Activated naive CD4-positive, alpha-beta T cell treated with anti-CD3 and anti-CD28 coated beads for 36 hours (primary cell): ENCODE measurements at regions of chr6 and their contacts with region 1.

Region 1: DNA sequence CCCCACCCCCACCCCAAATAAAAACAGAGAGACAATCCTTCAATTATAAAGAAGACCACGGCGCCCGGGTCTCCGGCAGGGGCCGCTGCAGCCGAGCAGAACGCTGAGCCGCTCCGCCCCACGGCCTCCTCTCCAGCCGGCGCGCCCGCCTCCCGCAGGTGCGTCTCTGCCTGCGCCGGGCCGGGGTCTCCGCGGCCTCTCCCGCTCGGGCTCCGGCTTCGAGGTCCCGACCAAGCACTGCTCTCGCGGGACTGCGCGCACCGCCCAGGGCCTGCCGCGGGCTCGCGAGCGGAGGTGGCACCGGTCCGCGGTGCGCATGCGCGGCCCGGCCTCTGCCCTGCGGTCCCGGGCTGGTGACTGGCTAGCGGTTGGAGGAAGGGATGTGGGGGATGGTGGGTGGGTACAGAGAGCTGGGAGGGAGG is 241 bp upstream of the SIRT5 start:
- DNase-seq: peak; percentile 91
- H3K4me3 Mint-ChIP-seq: peak overlapping the region; percentile 92
- H3K27ac Mint-ChIP-seq: peak overlapping the region; percentile 97
- H3K4me1 Mint-ChIP-seq: peaks cover 19% of the 10 kb centered on the region
- H3K27me3 Mint-ChIP-seq: no peaks in the 10 kb centered on the region

Region 2: DNA sequence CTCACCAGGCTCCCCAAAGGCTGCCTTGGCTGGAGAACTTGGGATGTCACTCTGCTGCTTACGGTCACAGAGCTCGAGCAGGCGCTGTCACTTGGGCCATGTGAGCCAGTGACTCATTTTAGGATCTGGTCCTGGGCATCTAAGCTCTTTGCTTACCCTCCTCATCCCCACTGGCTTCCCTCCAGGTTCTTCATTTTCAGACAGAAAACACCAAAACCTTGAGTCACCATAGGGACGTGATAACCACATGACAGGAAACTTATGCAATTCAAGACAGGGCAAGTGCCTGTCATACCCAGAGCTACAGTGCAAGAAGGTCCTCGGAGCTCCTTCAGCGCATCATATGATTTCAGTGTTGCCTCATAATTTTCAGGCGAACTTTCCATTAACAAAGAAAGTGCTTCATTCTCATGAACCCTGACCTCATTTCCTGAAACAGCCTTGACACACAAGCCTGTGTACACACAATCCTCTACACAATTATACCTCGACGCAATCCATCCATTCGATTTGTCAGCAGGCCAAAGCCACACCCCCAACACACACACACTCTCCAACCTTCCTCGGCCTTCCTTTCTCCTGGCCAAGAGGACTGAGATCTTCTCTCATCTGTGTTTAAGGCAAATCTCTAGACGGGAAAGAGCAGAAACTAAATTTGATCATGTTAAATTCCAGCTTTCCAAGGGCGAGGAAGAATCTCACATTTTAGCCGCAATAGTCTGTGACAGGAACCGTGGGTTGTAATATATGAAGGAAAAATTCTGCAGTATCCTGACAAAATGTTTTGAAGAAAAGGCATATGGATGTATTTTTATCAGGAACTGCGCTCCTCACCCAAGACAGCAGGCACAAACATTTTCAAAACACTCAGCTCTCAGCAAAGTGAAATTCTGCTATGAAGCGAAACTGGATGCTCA is 271.2 kb before region 1 on chr6:
- CTCF ChIA-PET with region 1: interaction called, 4 read pairs
- intact Hi-C with region 1: loop called (anchors 1 kb)
- DNase-seq: peak; percentile 79
- H3K4me3 Mint-ChIP-seq: peak overlapping the region; percentile 10
- H3K27ac Mint-ChIP-seq: peak overlapping the region; percentile 86
- H3K4me1 Mint-ChIP-seq: peaks cover 38% of the 10 kb centered on the region
- H3K27me3 Mint-ChIP-seq: no peaks in the 10 kb centered on the region

Region 3: DNA sequence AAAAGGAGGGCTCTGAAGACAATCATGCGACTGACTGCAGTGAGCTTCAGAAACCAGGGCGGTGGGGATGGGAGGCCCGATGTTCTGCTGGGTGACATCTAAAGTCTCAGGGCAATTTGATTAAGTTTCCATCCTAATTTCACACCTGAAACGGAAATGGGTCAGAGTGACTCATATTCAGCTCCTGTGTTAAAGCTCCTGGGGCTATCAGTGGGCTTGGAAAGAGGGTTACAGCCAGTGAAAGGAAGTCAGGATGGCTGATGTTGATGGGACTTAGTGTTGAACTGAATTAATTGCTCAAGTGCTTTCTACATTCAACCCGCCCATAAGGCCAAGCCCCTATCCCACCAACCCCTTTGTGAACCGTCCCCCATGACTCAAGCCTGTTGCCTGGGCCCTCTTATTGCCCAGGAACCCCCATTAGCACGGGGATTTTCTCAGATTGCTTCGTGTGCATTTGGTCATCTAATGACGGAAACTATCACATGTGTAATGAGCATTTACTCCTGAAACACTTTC is 198.7 kb before region 1 on chr6:
- CTCF ChIA-PET with region 1: interaction called, 6 read pairs
- intact Hi-C with region 1: loop called (anchors 1 kb)
- DNase-seq: peak; percentile 78
- H3K4me3 Mint-ChIP-seq: no peak overlapping the region
- H3K27ac Mint-ChIP-seq: peak overlapping the region; percentile 21
- H3K4me1 Mint-ChIP-seq: peaks cover 23% of the 10 kb centered on the region
- H3K27me3 Mint-ChIP-seq: no peaks in the 10 kb centered on the region

Region 4: GRCh38 chr6:13487122-13488014 is 86.8 kb before region 1 on chr6 and contains the start of gene GFOD1:
- CTCF ChIA-PET with region 1: interaction called, 3 read pairs
- intact Hi-C with region 1: loop called (anchors 1 kb)
- DNase-seq: peak; percentile 80
- H3K4me3 Mint-ChIP-seq: peak within 1 kb of the TSS; percentile 92
- H3K27ac Mint-ChIP-seq: peak within 1 kb of the TSS; percentile 47
- H3K4me1 Mint-ChIP-seq: peaks cover 24% of the 10 kb centered on the region
- H3K27me3 Mint-ChIP-seq: peaks cover 2% of the 10 kb centered on the region
- total RNA-seq, gene GFOD1: 3.7 to 4.2 TPM

Region 5: DNA sequence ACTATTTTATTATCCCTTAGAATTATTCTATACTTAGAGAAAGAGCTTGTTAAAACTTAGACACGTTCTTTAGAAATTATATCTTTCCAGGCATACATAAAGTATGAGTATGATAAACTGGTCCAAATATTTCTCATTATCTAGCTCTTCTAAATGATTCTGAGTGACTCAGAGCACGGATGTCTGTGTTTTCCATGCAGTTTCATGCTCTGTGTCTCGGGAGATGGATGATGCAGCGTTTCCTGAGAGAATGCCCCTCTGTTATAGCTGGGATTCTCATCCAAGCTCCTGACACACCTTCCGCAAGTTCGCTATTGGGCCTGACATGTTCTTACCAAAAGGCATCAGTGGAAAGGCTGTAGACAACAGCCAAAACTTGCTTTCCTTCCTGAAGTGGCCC is 19.6 kb after region 1 on chr6:
- CTCF ChIA-PET with region 1: interaction called, 14 read pairs
- intact Hi-C with region 1: no loop called
- DNase-seq: no peak
- H3K4me3 Mint-ChIP-seq: no peak overlapping the region
- H3K27ac Mint-ChIP-seq: no peak overlapping the region
- H3K4me1 Mint-ChIP-seq: no peaks in the 10 kb centered on the region
- H3K27me3 Mint-ChIP-seq: no peaks in the 10 kb centered on the region

Region 6: DNA sequence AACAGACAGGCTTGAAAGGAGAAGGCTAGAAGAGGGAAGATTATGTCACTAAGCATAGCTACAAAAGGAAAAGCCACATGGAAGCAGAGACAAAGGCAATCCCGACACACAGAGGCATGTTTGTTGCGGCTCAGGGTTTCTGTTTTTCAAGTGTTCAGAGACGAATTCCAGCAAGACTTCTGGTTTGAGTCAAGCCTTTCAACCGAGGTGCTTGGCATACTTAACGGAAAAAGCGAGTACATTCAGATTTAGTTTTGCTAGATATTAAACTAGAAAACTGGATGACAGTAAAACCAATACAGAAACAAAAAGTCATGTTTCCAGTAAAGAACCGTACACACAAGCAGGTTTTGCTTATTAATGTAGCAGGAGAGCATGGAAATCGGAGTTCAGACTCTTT is 213.0 kb after region 1 on chr6:
- CTCF ChIA-PET with region 1: no interaction called
- intact Hi-C with region 1: loop called (anchors 1 kb)
- DNase-seq: peak; percentile 75
- H3K4me3 Mint-ChIP-seq: peak overlapping the region; percentile 14
- H3K27ac Mint-ChIP-seq: peak overlapping the region; percentile 79
- H3K4me1 Mint-ChIP-seq: peaks cover 34% of the 10 kb centered on the region
- H3K27me3 Mint-ChIP-seq: no peaks in the 10 kb centered on the region